Right cardiac atrium (tissue), 5 donors: ENCODE measurements at regions of chr3 and their contacts with region 1.

Region 1: GRCh38 chr3:120742198-120742849 is at the starts of genes GTF2E1 and RABL3:
- DNase-seq: peak; percentile 96 to 98 (median 97)
- ATAC-seq: peak; percentile 100
- H3K4me3 ChIP-seq: peak within 1 kb of the TSS; percentile 99
- H3K27ac ChIP-seq: peak within 1 kb of the TSS; percentile 95
- H3K4me1 ChIP-seq: no peaks in the 10 kb centered on the region
- H3K27me3 ChIP-seq: no peaks in the 10 kb centered on the region
- total RNA-seq, gene GTF2E1: 10.3 to 13.9 (median 11.7) TPM
- total RNA-seq, gene RABL3: 13.6 to 19.6 (median 15.7) TPM

Region 2: DNA sequence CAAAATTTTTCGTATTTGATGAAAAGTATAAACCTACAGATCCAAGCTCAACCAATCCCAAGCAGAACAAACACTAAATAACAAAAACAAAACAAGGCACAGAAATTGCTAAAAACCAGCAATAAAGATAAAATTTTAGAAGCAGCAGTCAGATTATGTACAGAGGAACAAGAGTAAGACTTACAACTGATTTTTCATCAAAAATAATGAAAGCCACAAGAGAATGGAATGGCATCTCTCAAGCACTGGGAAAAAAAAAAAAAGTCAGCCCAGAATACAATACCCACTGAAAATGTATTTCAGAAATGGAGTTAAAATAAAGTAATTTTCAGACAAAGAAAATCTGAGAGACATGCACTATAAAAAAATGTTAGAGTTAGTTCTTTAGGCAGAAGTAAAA is 484.3 kb before region 1 on chr3:
- intact Hi-C with region 1: no loop called
- DNase-seq: no peak
- ATAC-seq: no peak
- H3K4me3 ChIP-seq: no peak overlapping the region
- H3K27ac ChIP-seq: no peak overlapping the region
- H3K4me1 ChIP-seq: no peaks in the 10 kb centered on the region
- H3K27me3 ChIP-seq: no peaks in the 10 kb centered on the region

Region 3: DNA sequence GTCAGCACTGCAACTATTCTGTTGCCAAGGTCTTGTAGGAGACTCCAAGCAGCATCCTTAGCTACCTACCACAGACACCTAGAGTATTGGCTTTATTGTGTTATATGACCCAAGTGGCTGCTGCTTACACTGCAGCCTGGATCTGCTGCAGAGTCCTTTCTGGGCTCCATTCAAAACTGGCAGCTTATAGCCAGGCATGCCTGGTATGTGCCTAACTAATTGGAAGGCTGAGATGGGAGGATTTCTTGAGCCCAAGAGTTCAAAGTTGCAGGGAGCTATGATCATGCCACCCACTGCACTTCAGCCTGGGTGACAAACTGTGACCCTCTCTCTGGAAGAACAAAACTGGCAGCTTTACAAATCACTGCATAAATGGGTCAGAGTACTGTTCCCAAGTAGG is 137.5 kb before region 1 on chr3:
- intact Hi-C with region 1: loop called in 1 of 4 experiments (anchors 10 kb)
- DNase-seq: no peak
- ATAC-seq: peak in 1 of 2 donors; percentile 46
- H3K4me3 ChIP-seq: no peak overlapping the region
- H3K27ac ChIP-seq: no peak overlapping the region
- H3K4me1 ChIP-seq: peaks cover 5% of the 10 kb centered on the region
- H3K27me3 ChIP-seq: no peaks in the 10 kb centered on the region